ENCODE measurements at regions of chr7 and their contacts with region 1.

Region 1: GRCh38 chr7:38369816-38370493 is 96.5 kb upstream of the TARP start:
- DNase-seq: peak; percentile 92
- ATAC-seq: peak; percentile 67
- H3K4me3 Mint-ChIP-seq: no peak overlapping the region
- H3K27ac Mint-ChIP-seq: peak overlapping the region; percentile 73
- H3K4me1 Mint-ChIP-seq: peaks cover 52% of the 10 kb centered on the region
- H3K27me3 Mint-ChIP-seq: no peaks in the 10 kb centered on the region

Region 2: GRCh38 chr7:37448636-37449361 is 921.2 kb before region 1 on chr7 and contains the start of gene ELMO1:
- CTCF ChIA-PET with region 1: no interaction called
- POLR2A ChIA-PET with region 1: no interaction called
- intact Hi-C with region 1: loop called in 1 of 2 experiments (anchors 10 kb)
- DNase-seq: peak; percentile 88
- ATAC-seq: peak; percentile 81
- H3K4me3 Mint-ChIP-seq: peak within 1 kb of the TSS; percentile 81
- H3K27ac Mint-ChIP-seq: peak within 1 kb of the TSS; percentile 98
- H3K4me1 Mint-ChIP-seq: peaks cover 51% of the 10 kb centered on the region
- H3K27me3 Mint-ChIP-seq: no peaks in the 10 kb centered on the region
- total RNA-seq, gene ELMO1: 96.2 to 173 TPM

Region 3: GRCh38 chr7:37916673-37917660 is 453.0 kb before region 1 on chr7 and contains the start of gene SFRP4:
- CTCF ChIA-PET with region 1: no interaction called
- POLR2A ChIA-PET with region 1: no interaction called
- intact Hi-C with region 1: loop called in 1 of 2 experiments (anchors 10 kb)
- DNase-seq: peak; percentile 34
- ATAC-seq: no peak
- H3K4me3 Mint-ChIP-seq: peak within 1 kb of the TSS; percentile 35
- H3K27ac Mint-ChIP-seq: no peak within 1 kb of the TSS
- H3K4me1 Mint-ChIP-seq: peaks cover 15% of the 10 kb centered on the region
- H3K27me3 Mint-ChIP-seq: peaks cover 52% of the 10 kb centered on the region
- total RNA-seq, gene SFRP4: not detected

Region 4: GRCh38 chr7:38178004-38178694 is 191.8 kb before region 1 on chr7 and contains the start of gene STARD3NL:
- CTCF ChIA-PET with region 1: interaction called, 14 read pairs
- POLR2A ChIA-PET with region 1: no interaction called
- intact Hi-C with region 1: loop called in 1 of 2 experiments (anchors 5 kb)
- DNase-seq: peak; percentile 92
- ATAC-seq: peak; percentile 100
- H3K4me3 Mint-ChIP-seq: peak within 1 kb of the TSS; percentile 95
- H3K27ac Mint-ChIP-seq: peak within 1 kb of the TSS; percentile 93
- H3K4me1 Mint-ChIP-seq: peaks cover 37% of the 10 kb centered on the region
- H3K27me3 Mint-ChIP-seq: peaks cover 10% of the 10 kb centered on the region
- total RNA-seq, gene STARD3NL: 27.9 to 30.8 TPM

Region 5: DNA sequence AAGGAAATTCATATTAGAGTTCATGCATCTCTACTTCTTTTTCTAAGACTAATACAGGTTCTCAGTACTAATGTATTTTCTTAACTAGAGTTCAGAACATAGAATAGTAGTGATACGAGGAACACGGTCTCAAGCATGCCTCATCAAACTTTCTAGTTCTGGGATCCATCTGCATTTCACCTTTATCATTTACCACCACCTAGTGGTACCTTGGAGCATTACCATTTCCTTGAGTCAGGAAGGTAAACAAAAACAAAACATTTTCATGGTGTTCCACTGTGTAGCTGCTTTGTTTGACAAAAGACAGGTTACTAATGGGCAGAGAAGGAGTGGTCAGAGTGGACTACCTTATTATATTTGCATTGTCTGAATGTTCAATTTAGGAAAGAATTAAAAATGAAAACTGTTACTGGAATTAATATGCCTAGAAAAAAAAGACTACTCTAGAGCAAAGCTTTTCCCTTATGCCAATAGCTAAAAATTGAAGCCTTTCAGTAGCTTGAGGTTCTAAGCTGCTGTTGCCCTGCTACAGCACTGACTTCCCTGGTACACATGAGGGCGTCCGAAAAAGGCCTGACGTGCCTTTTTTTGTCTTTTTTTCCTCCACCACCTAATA is 147.4 kb before region 1 on chr7:
- CTCF ChIA-PET with region 1: interaction called, 203 read pairs
- POLR2A ChIA-PET with region 1: no interaction called
- intact Hi-C with region 1: loop called in 1 of 2 experiments (anchors 2 kb)
- DNase-seq: no peak
- ATAC-seq: peak; percentile 51
- H3K4me3 Mint-ChIP-seq: no peak overlapping the region
- H3K27ac Mint-ChIP-seq: no peak overlapping the region
- H3K4me1 Mint-ChIP-seq: peaks cover 20% of the 10 kb centered on the region
- H3K27me3 Mint-ChIP-seq: no peaks in the 10 kb centered on the region

Region 6: DNA sequence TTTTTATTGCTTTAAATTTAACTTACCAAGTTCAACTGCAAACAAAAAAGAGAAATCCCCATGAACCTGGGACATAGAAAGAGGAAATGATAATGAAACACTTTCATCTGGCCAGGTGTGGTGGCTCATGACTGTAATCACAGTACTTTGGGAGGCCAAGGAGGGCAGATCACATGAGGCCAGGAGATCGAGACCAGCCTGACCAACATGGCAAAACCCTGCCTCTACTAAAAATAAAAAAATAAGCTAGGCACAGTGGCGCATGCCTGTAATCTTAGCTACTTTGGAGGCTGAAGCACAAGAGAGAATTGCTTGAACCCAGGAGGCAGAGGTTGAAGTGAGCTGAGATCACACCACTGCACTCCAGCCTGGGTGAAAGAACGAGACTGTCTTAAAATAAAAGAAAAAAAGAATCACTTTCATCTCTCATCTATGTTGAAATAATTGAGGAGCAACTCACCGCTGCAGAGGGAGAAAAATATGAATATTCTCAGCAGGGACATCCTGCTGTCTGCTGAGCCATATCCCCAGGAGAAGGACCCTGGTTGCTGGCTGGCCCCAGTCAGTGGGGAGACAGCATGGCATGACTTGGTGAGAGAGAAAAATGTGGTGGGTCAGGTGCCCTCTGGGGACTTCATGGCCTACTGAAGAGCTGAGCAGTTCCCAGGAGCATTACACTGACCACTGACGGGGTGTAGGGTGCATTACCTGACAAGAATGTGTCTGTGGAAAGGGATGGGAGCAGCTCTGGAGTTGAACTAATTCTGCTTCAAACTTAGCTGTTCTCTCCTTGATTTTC is 73.7 kb before region 1 on chr7:
- CTCF ChIA-PET with region 1: no interaction called
- POLR2A ChIA-PET with region 1: no interaction called
- intact Hi-C with region 1: no loop called
- DNase-seq: no peak
- ATAC-seq: no peak
- H3K4me3 Mint-ChIP-seq: no peak overlapping the region
- H3K27ac Mint-ChIP-seq: no peak overlapping the region
- H3K4me1 Mint-ChIP-seq: no peaks in the 10 kb centered on the region
- H3K27me3 Mint-ChIP-seq: no peaks in the 10 kb centered on the region

Region 7: GRCh38 chr7:38335492-38336147 is 34.3 kb before region 1 on chr7:
- CTCF ChIA-PET with region 1: interaction called, 35 read pairs
- POLR2A ChIA-PET with region 1: no interaction called
- intact Hi-C with region 1: no loop called
- DNase-seq: peak; percentile 91
- ATAC-seq: peak; percentile 95
- H3K4me3 Mint-ChIP-seq: peak overlapping the region; percentile 65
- H3K27ac Mint-ChIP-seq: peak overlapping the region; percentile 80
- H3K4me1 Mint-ChIP-seq: peaks cover 42% of the 10 kb centered on the region
- H3K27me3 Mint-ChIP-seq: no peaks in the 10 kb centered on the region

Region 8: GRCh38 chr7:38465956-38466355 is 96.0 kb after region 1 on chr7:
- CTCF ChIA-PET with region 1: no interaction called
- POLR2A ChIA-PET with region 1: no interaction called
- intact Hi-C with region 1: no loop called
- DNase-seq: no peak
- ATAC-seq: no peak
- H3K4me3 Mint-ChIP-seq: no peak overlapping the region
- H3K27ac Mint-ChIP-seq: no peak overlapping the region
- H3K4me1 Mint-ChIP-seq: peaks cover 19% of the 10 kb centered on the region
- H3K27me3 Mint-ChIP-seq: peaks cover 5% of the 10 kb centered on the region

Region 9: DNA sequence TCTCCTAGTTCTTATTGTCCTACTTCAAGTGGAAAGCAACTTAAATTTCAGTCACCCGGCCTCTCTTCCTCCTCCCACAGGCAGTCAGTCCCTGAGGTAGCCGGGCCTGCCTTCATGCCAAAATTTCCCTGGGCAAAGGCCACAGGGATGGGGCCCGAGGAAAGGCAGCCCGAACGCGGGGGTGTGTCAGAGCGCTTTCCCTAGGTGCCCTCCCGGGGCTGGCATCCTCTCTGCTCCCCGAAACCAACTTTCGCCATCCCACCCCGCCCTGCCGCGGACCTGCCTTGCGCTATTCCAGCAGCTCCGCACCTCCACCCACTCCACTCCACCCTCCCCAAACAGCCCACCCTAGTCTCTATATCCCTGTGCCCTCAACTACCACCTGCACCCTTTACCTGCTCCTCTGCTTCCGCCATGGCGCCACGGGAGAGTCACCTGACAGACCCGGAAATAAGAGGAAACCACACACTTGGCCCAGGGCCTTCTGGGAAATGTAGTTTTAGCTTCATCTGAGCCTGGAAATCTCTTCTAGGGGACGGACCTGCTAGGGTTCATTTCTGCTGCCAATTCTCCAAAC is 538.9 kb after region 1 on chr7 and contains the start of gene VPS41:
- CTCF ChIA-PET with region 1: no interaction called
- POLR2A ChIA-PET with region 1: no interaction called
- intact Hi-C with region 1: loop called in 1 of 2 experiments (anchors 5 kb)
- DNase-seq: peak; percentile 87
- ATAC-seq: peak; percentile 98
- H3K4me3 Mint-ChIP-seq: peak within 1 kb of the TSS; percentile 95
- H3K27ac Mint-ChIP-seq: peak within 1 kb of the TSS; percentile 81
- H3K4me1 Mint-ChIP-seq: peaks cover 31% of the 10 kb centered on the region
- H3K27me3 Mint-ChIP-seq: no peaks in the 10 kb centered on the region
- total RNA-seq, gene VPS41: 48.6 to 59.3 TPM